Endothelial cell of umbilical vein (primary cell): ENCODE measurements at regions of chr19 and their contacts with region 1.

Region 1: GRCh38 chr19:16446724-16447368 is 24.9 kb downstream of the EPS15L1 start:
- DNase-seq: peak; percentile 99
- H3K4me3 ChIP-seq: peak overlapping the region in 1 of 3 experiments; percentile 36
- H3K27ac ChIP-seq: peak overlapping the region; percentile 81
- H3K4me1 ChIP-seq: peaks cover 41% of the 10 kb centered on the region
- H3K27me3 ChIP-seq: no peaks in the 10 kb centered on the region
- CTCF ChIP-seq: no peak
- POLR2A ChIP-seq: peak; percentile 73

Region 2: DNA sequence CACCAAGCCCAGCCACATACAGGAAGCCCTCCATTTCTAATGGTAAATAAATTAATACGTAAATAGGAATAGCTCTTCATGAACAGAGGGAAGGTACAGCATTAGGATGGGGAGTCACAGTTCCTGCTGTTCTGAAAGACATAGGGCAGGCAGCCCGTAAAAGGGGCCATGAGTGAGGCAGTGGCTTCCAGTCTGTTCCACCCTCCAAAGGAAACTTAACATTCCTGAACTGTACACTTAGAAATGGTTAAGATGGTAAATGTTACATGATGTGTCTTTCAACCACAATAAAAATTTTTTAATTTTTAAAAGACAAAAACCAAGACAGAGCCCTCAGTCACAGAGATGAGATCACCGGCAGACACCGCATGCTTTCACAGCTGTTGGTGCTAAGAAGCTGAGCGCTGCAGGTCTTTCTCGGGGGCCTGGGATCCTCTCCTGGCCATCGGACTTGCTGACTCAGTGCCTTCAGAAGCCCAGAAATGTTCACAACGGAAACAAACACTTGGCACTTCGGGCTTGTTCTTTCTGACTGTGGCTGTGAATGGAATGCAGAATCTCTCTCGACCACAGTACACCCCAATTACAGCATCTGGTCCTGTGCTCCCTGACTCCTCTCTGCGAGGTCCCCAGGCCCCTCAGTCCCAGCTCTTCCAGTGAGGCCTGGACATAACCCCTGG is 11.5 kb before region 1 on chr19:
- CTCF ChIA-PET with region 1: interaction called, 11 read pairs
- POLR2A ChIA-PET with region 1: no interaction called
- dilution Hi-C with region 1: no loop called
- intact Hi-C with region 1: loop called (anchors 1 kb)
- DNase-seq: peak; percentile 84
- H3K4me3 ChIP-seq: no peak overlapping the region
- H3K27ac ChIP-seq: peak overlapping the region; percentile 72
- H3K4me1 ChIP-seq: peaks cover 27% of the 10 kb centered on the region
- H3K27me3 ChIP-seq: no peaks in the 10 kb centered on the region
- CTCF ChIP-seq: no peak
- POLR2A ChIP-seq: no peak